A673 (cell line): ENCODE measurements at regions of chr2 and their contacts with region 1.

Region 1: DNA sequence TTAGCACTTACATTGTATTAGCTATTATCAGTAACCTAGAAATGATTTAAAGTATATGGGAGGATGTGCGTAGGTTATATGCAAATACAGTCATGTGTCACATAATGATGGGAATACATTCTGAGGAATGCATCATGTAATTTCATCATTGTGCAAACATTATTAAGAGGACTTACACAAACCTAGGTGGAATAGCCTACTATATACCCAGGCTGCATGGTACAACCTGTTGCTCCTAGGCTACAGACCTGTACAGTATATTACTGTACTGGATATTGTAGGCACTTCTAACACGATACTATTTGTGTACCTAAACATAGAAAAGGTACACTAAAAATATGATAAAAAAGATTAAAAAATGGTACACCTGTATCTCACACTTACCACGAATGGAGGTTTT is 7.9 kb downstream of the RIF1 start:
- DNase-seq: no peak
- H3K4me3 ChIP-seq: no peak overlapping the region
- H3K27ac ChIP-seq: no peak overlapping the region
- H3K4me1 ChIP-seq: no peaks in the 10 kb centered on the region
- H3K27me3 ChIP-seq: no peaks in the 10 kb centered on the region
- CTCF ChIP-seq: no peak

Region 2: DNA sequence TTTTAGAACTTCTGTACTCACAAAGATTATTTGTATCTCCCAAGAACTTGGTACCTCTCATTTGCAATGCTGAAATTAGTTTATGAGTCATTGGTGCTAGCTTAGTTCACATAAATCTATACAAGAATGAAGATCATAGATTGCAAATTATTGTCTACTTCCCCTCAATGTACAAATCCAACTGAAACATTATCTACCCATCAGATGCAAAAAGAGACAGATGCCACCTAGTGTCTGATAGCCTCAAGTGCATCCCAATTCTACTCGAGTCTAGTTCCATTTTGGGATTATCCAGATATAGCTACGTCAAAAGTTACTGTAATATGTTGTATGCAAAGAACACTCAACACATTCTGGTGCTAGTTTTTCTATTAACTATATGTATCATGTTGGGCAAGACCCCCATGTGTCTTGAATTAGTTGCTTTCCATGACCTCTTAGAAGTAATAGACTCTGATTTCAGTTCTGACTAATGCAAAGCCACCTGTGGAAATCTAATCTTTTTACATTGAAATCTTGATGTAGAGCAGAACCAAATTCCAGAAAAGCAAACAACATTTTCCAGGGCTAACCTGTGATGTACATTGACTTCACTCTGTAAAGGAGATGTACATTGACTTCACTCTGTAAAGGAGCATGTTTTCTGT is 366.0 kb before region 1 on chr2:
- CTCF ChIA-PET with region 1: no interaction called
- POLR2A ChIA-PET with region 1: no interaction called
- intact Hi-C with region 1: no loop called
- DNase-seq: peak; percentile 71
- H3K4me3 ChIP-seq: no peak overlapping the region
- H3K27ac ChIP-seq: no peak overlapping the region
- H3K4me1 ChIP-seq: no peaks in the 10 kb centered on the region
- H3K27me3 ChIP-seq: no peaks in the 10 kb centered on the region
- CTCF ChIP-seq: peak; percentile 92

Region 3: GRCh38 chr2:151269798-151270568 is 147.7 kb before region 1 on chr2:
- CTCF ChIA-PET with region 1: no interaction called
- POLR2A ChIA-PET with region 1: no interaction called
- intact Hi-C with region 1: loop called (anchors 5 kb)
- DNase-seq: no peak
- H3K4me3 ChIP-seq: no peak overlapping the region
- H3K27ac ChIP-seq: no peak overlapping the region
- H3K4me1 ChIP-seq: no peaks in the 10 kb centered on the region
- H3K27me3 ChIP-seq: no peaks in the 10 kb centered on the region
- CTCF ChIP-seq: no peak